A549 (cell line): ENCODE measurements at regions of chr10 and their contacts with region 1.

Region 1: GRCh38 chr10:33273295-33274002 is 61.0 kb downstream of the NRP1 start:
- DNase-seq: peak; percentile 78 to 98
- ATAC-seq: peak; percentile 89 to 92
- H3K4me3 ChIP-seq: peak overlapping the region; percentile 16; the same call in 2 of the 3 replicates
- H3K27ac ChIP-seq: peak overlapping the region; percentile 92 to 98
- H3K4me1 ChIP-seq: peaks cover 91% of the 10 kb centered on the region
- CTCF ChIP-seq: no peak
- EP300 ChIP-seq: peak; percentile 84 to 93; a peak in 4 of 5 replicates
- POLR2A ChIP-seq: no peak; the same call in 1 of the 2 replicates
- RAD21 ChIP-seq: peak; percentile 59 to 64; a peak in 4 of 5 replicates

Region 2: GRCh38 chr10:33237736-33238624 is 35.5 kb before region 1 on chr10:
- CTCF ChIA-PET with region 1: interaction called, 6 read pairs
- POLR2A ChIA-PET with region 1: interaction called, 10 read pairs
- DNase-seq: peak; percentile 90 to 96
- ATAC-seq: peak; percentile 94 to 97
- H3K4me3 ChIP-seq: no peak overlapping the region
- H3K27ac ChIP-seq: peak overlapping the region; percentile 91 to 92
- H3K4me1 ChIP-seq: peaks cover 84% of the 10 kb centered on the region
- CTCF ChIP-seq: no peak
- EP300 ChIP-seq: peak; percentile 79 to 83; a peak in 3 of 5 replicates
- POLR2A ChIP-seq: no peak
- RAD21 ChIP-seq: peak; percentile 28 to 44; a peak in 4 of 5 replicates

Region 3: DNA sequence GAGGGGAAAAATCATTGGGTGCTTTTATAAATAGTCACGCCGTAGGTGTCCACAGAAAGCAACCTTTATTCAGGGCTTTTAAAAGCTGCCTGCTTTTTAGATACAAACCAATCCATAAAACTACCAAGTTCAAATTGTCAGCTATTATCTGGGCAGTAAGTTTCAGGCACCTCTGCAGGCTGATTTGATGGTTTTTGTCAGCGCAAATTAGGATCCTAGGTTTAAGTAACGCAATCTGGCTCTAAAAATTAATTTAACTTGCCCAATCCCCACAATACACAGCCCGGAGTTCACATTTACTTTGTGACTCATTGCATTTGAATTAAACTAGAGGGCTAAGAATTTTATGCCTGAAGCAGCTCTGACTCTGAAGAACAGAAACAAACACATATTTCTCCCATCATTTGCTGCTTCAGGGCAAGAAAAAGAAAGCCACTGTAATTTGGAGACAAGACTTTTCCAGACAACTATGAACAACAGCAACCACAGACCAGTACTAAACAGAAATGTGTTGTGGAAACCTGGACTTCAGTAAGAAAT is 17.7 kb after region 1 on chr10:
- CTCF ChIA-PET with region 1: interaction called, 10 read pairs
- POLR2A ChIA-PET with region 1: interaction called, 5 read pairs
- DNase-seq: peak; percentile 60 to 63
- ATAC-seq: peak; percentile 75 to 80; a peak in 5 of 6 replicates
- H3K4me3 ChIP-seq: peak overlapping the region; percentile 11; the same call in 2 of the 3 replicates
- H3K27ac ChIP-seq: peak overlapping the region; percentile 75 to 89
- H3K4me1 ChIP-seq: peaks cover 78% of the 10 kb centered on the region
- CTCF ChIP-seq: 0 out of 3 replicates have a peak, but pooled peaks have one; percentile 3
- EP300 ChIP-seq: peak in 1 of 2 experiments; percentile 56; a peak in 1 of 5 replicates
- POLR2A ChIP-seq: no peak
- RAD21 ChIP-seq: no peak; a peak in 1 of 5 replicates

Region 4: GRCh38 chr10:33330543-33331378 is 57.3 kb after region 1 on chr10:
- CTCF ChIA-PET with region 1: interaction called, 3 read pairs
- POLR2A ChIA-PET with region 1: interaction called, 12 read pairs
- DNase-seq: peak; percentile 60 to 87
- ATAC-seq: peak in 1 of 2 experiments; percentile 36; a peak in 3 of 6 replicates
- H3K4me3 ChIP-seq: peak overlapping the region; percentile 85
- H3K27ac ChIP-seq: peak overlapping the region; percentile 99
- H3K4me1 ChIP-seq: peaks cover 46% of the 10 kb centered on the region
- CTCF ChIP-seq: peak; percentile 92
- EP300 ChIP-seq: no peak
- POLR2A ChIP-seq: no peak
- RAD21 ChIP-seq: peak; percentile 89 to 92

Region 5: GRCh38 chr10:33381451-33382242 is 108.2 kb after region 1 on chr10:
- CTCF ChIA-PET with region 1: no interaction called
- POLR2A ChIA-PET with region 1: no interaction called
- DNase-seq: no peak
- ATAC-seq: no peak
- H3K4me3 ChIP-seq: no peak overlapping the region
- H3K27ac ChIP-seq: no peak overlapping the region
- H3K4me1 ChIP-seq: peaks cover 18% of the 10 kb centered on the region
- CTCF ChIP-seq: no peak
- EP300 ChIP-seq: no peak
- POLR2A ChIP-seq: no peak
- RAD21 ChIP-seq: no peak